Activated naive CD8-positive, alpha-beta T cell treated with anti-CD3 and anti-CD28 coated beads, Interleukin-2, amount 10 ng/mL, durations not matched to agents 7 days and 5 days (primary cell): ENCODE measurements at regions of chr1 and their contacts with region 1.

Region 1: DNA sequence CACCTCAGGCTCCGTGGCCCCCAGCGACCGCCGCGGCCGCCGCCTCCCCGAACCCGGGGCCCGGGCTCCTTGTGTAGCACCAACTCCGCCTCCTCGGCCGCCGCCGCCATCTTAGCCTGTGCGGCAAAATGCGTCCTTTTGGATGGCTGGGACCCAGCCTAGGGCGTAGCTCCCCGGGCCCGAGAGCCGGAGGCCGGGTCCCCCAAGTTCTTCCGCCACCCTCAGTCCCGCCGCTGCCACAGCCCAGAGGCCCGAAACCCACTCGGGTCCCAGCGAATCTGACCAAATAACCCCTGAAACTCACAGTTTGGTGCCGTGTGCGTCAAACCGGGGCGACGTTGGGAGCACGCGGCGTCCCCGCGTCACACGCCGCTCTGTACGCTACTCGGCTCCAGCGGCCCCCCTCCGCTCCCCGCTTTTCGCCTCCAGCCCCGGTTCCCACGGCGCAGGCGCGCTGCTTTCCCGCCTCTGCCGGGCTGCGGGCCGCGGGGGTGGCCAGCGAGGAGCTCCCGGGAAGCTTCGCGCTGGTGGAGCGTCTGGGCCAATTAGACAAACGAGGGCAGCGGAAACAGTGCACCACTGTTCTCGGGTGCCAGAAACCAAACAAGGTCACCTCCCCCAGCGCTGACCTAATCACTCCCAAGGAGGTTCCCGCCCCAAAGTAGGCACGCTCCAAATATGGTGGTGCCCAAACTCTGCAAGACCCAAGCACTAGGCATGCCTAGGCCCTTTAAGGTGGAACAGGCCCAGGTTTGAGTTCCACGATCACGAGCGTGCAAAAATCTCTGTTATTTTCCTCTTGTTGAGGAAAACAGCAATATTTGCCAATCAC is at the start of gene ZNF644:
- DNase-seq: peak; percentile 91
- ATAC-seq: peak; percentile 85
- H3K4me3 Mint-ChIP-seq: peak within 1 kb of the TSS; percentile 95
- H3K27ac Mint-ChIP-seq: peak within 1 kb of the TSS; percentile 99
- H3K4me1 Mint-ChIP-seq: peaks cover 35% of the 10 kb centered on the region
- H3K27me3 Mint-ChIP-seq: peaks cover 2% of the 10 kb centered on the region
- total RNA-seq, gene ZNF644: 53.1 to 55.5 TPM

Region 2: DNA sequence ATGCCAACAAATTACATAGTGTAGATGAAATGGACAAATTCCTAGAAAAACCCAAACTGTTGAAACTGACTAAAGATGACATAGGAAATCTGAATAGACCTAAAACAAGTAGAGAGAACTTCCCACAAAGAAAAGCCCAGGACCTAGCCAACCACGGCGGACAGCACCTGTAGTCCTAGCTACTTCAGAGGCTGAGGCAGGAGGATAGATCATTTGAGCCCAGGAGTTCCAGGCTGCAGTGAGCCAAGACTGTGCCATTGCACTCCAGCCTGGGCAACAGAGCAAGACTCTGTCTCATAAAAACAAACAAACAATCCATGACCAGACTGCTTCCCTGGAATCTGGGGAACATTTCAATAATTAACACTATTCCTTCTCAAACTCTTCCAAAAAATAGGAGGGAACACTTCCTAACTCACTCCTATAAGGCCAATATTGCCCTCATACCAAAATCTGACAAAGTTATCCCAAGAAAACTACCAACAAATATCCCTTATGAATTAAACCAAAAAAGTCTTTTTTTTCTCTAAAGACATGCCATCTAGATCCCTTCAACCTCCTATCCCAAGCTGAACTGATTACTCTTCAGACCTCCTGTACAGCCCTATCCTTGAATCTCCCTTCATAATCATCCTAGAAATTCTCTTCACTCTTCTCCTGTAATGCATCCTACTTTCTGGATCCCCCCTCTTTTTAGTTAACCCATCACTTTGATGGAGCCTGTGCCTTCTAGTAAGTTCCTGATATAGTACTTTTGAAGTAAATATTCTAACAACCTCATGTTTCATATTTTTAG is 15.6 kb before region 1 on chr1:
- POLR2A ChIA-PET with region 1: interaction called, 12 read pairs
- DNase-seq: no peak
- ATAC-seq: no peak
- H3K4me3 Mint-ChIP-seq: no peak overlapping the region
- H3K27ac Mint-ChIP-seq: no peak overlapping the region
- H3K4me1 Mint-ChIP-seq: peaks cover 27% of the 10 kb centered on the region
- H3K27me3 Mint-ChIP-seq: no peaks in the 10 kb centered on the region

Region 3: GRCh38 chr1:91011726-91012125 is 10.2 kb before region 1 on chr1:
- POLR2A ChIA-PET with region 1: interaction called, 12 read pairs
- DNase-seq: no peak
- ATAC-seq: no peak
- H3K4me3 Mint-ChIP-seq: no peak overlapping the region
- H3K27ac Mint-ChIP-seq: no peak overlapping the region
- H3K4me1 Mint-ChIP-seq: peaks cover 37% of the 10 kb centered on the region
- H3K27me3 Mint-ChIP-seq: no peaks in the 10 kb centered on the region